Prostate gland (tissue), 2 donors: ENCODE measurements at regions of chr9 and their contacts with region 1.

Region 1: DNA sequence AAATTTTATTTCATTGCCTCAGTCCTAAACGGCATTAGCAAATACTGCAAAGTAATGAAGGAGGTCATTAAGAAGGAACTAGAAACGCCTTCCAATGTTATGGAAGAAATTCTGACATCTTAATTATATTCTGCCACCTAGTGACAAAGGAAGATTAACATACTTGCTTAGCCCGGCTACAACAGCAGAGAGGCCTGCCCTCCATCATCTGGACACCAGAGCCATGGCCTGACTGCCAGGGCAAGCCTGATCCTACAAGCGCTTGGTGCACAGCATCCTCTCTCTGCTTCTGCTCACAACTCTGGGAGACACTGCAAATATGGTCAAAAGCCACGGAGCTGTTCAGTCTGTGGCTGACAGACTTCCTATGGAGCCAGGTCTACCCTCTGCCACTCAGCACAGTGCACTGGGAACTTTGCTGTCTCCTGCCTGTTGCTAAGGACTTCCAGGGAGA is 87.3 kb upstream of the SLC44A1 start:
- DNase-seq: peak; percentile 26
- H3K4me3 ChIP-seq: no peak overlapping the region
- H3K27ac ChIP-seq: no peak overlapping the region
- H3K4me1 ChIP-seq: no peaks in the 10 kb centered on the region
- H3K27me3 ChIP-seq: no peaks in the 10 kb centered on the region
- CTCF ChIP-seq: peak in 3 of 4 experiments; percentile 54 to 66 (median 60)
- POLR2A ChIP-seq: no peak

Region 2: GRCh38 chr9:104863180-104863883 is 293.8 kb before region 1 on chr9:
- intact Hi-C with region 1: loop called (anchors 5 kb)
- DNase-seq: peak; percentile 25
- H3K4me3 ChIP-seq: no peak overlapping the region
- H3K27ac ChIP-seq: no peak overlapping the region
- H3K4me1 ChIP-seq: peaks cover under 1% of the 10 kb centered on the region
- H3K27me3 ChIP-seq: no peaks in the 10 kb centered on the region
- CTCF ChIP-seq: peak; percentile 41 to 74 (median 64)
- POLR2A ChIP-seq: no peak